ENCODE measurements at regions of chr11 and their contacts with region 1.

Region 1: DNA sequence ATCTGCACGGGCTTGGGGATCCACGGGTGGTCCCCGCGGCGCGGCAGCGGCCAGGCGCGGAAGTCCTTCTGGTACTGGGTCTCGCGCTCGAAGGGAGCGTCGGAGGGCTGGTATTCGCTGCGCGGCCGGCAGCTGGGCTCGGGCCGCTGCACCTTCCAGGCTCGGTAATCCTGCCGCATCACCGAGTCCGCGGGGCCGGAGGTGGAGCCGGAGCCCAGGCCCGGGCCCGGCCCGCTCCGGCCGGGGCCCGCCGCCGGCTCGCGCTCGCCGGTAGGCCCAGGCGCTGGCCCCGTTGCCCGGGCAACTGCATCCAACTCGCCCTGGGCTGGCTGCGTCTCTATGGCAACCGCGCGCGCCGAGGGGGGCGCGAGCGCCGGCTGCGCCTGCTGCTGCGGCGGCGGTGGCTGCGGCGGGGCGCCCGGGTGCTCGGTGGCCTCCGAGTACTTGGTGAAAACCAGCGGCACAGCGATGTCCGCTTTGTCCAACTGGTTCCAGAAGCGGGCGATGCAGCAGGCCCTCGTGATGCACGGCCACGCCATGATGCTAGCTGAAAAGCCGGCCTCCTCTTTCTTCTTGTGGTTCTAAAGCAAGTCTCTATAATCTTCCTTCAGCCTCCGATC is 897 bp downstream of the MAP6 start:
- DNase-seq: peak; percentile 70
- H3K4me3 ChIP-seq: peak overlapping the region; percentile 38
- H3K27ac ChIP-seq: no peak overlapping the region
- H3K4me1 ChIP-seq: peaks cover 27% of the 10 kb centered on the region
- H3K27me3 ChIP-seq: peaks cover 74% of the 10 kb centered on the region
- CTCF ChIP-seq: no peak

Region 2: DNA sequence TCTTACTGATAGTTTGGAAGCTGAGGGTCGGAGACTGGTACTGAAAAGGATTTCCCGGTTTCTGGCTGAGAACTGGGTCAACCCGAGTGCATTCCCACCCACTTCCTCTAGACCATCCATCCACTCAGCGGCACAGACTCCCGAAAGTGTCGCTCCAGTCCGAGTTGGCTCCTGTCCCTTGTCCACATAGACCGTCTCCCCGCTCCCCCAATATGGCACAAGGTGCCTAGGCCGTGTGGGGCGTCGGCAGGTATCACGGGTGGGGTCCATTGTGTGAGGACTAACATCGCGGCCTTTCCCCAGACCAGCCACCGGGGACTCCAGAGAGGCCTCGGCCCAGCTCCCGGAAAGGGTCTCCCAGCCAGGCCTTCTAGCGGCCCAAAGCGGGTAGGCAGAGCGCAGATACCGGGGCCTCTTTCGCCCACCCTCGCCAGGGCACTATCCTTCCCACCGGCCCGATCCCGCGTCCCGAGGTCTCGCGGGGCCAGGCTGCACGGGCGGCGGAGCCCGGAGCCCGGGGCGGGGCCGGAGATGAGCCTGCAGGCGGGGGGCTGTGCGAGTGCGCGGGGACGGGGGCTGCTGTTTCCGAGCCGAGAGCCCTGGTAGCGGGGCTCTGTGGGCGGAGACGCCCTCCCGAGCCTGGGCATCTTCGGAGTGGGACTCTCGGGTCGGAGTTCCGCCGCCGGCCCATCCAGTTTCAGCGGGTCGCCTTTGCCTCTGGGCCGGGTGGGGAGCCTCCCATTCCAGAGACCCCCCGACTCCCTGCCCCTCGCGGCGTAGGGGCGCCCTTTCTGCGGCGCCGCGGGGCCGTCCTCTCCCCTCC is 84.8 kb before region 1 on chr11:
- CTCF ChIA-PET with region 1: no interaction called
- POLR2A ChIA-PET with region 1: no interaction called
- intact Hi-C with region 1: loop called (anchors 5 kb)
- DNase-seq: peak; percentile 78
- H3K4me3 ChIP-seq: peak overlapping the region; percentile 72
- H3K27ac ChIP-seq: peak overlapping the region; percentile 92
- H3K4me1 ChIP-seq: peaks cover 20% of the 10 kb centered on the region
- H3K27me3 ChIP-seq: no peaks in the 10 kb centered on the region
- CTCF ChIP-seq: peak; percentile 45

Region 3: GRCh38 chr11:75597636-75598035 is 70.3 kb before region 1 on chr11:
- CTCF ChIA-PET with region 1: no interaction called
- POLR2A ChIA-PET with region 1: no interaction called
- intact Hi-C with region 1: loop called (anchors 5 kb)
- DNase-seq: peak; percentile 61
- H3K4me3 ChIP-seq: no peak overlapping the region
- H3K27ac ChIP-seq: no peak overlapping the region
- H3K4me1 ChIP-seq: peaks cover 4% of the 10 kb centered on the region
- H3K27me3 ChIP-seq: no peaks in the 10 kb centered on the region
- CTCF ChIP-seq: peak; percentile 94

Region 4: GRCh38 chr11:76131671-76132631 is 464.0 kb after region 1 on chr11:
- CTCF ChIA-PET with region 1: no interaction called
- POLR2A ChIA-PET with region 1: no interaction called
- intact Hi-C with region 1: no loop called
- DNase-seq: no peak
- H3K4me3 ChIP-seq: no peak overlapping the region
- H3K27ac ChIP-seq: no peak overlapping the region
- H3K4me1 ChIP-seq: peaks cover 20% of the 10 kb centered on the region
- H3K27me3 ChIP-seq: no peaks in the 10 kb centered on the region
- CTCF ChIP-seq: no peak

Region 5: DNA sequence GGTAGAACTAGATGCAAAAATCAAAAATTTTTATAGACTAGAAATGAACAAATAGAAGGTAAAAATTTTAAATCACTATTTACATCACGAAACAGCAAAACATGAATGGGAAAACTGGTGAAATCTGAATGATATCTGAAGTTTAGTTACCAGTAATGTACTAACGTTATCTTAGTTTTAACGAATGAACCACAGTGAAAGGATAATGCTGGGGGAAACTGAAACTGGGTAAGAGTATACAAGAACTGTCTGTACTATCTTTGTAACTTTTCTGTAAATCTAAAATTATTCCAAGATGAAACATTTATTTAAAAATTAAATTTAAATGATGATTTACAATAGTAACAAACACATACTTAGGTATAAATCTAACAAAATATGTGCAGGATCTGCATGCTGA is 1626.1 kb after region 1 on chr11:
- CTCF ChIA-PET with region 1: no interaction called
- POLR2A ChIA-PET with region 1: interaction called, 13 read pairs
- intact Hi-C with region 1: no loop called
- DNase-seq: no peak
- H3K4me3 ChIP-seq: no peak overlapping the region
- H3K27ac ChIP-seq: no peak overlapping the region
- H3K4me1 ChIP-seq: no peaks in the 10 kb centered on the region
- H3K27me3 ChIP-seq: peaks cover 7% of the 10 kb centered on the region
- CTCF ChIP-seq: no peak

Measured in A673 (cell line).